Pancreas (tissue), 10 donors: ENCODE measurements at regions of chr1 and their contacts with region 1.

Region 1: DNA sequence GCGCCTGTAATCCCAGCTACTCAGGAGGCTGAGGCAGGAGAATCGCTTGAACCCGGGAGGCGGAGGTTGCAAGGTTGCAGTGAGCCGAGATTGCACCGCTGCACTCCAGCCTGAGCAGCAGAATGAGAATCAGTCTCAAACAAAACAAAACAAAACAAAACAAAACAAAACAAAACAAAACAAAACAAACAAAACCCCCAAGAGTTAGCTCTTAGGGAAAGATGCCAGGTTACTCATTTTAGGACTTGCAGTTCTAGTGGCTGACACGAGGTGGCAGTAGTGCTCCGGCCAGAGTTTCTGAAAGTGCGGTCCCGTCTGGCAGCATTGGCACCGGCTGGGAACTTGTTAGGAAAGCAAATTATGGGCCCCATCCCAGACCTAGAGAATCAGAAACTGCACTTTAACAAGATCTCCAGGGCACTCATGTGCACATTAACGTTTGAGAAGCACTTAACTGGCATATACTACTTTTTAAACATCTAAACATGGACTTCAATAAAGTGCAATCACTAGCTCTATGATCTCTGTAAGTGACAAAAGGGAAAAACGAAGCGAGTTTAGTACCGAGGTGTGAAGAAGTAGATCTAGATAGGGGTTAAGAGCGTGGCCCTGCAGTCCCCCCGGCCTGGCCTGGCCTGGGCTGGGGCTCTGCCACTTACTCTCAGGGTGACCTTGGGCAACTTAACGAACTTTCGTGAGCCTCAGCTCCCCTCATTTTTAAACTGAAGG is 41.9 kb upstream of the TNFRSF1B start:
- DNase-seq: peak in 5 of 6 donors; percentile 43 to 83 (median 71)
- ATAC-seq: peak; percentile 63 to 95 (median 88)
- H3K4me3 ChIP-seq: no peak overlapping the region
- H3K27ac ChIP-seq: no peak overlapping the region
- H3K4me1 ChIP-seq: peaks cover 0 to 7% (median 0%) of the 10 kb centered on the region in 3 donors
- H3K27me3 ChIP-seq: peaks cover 0 to 3% (median 0%) of the 10 kb centered on the region in 4 donors
- CTCF ChIP-seq: peak; percentile 85 to 90 (median 87)

Region 2: GRCh38 chr1:12208764-12209494 is 84.1 kb after region 1 on chr1:
- intact Hi-C with region 1: loop called (anchors 2 to 10 kb)
- DNase-seq: peak; percentile 64 to 95 (median 86)
- ATAC-seq: peak; percentile 82 to 94 (median 91)
- H3K4me3 ChIP-seq: no peak overlapping the region
- H3K27ac ChIP-seq: no peak overlapping the region
- H3K4me1 ChIP-seq: no peaks in the 10 kb centered on the region
- H3K27me3 ChIP-seq: no peaks in the 10 kb centered on the region
- CTCF ChIP-seq: peak; percentile 89 to 96 (median 90)

Region 3: GRCh38 chr1:12294076-12294475 is 169.2 kb after region 1 on chr1:
- intact Hi-C with region 1: no loop called
- DNase-seq: no peak
- ATAC-seq: no peak
- H3K4me3 ChIP-seq: no peak overlapping the region
- H3K27ac ChIP-seq: no peak overlapping the region
- H3K4me1 ChIP-seq: no peaks in the 10 kb centered on the region
- H3K27me3 ChIP-seq: no peaks in the 10 kb centered on the region
- CTCF ChIP-seq: no peak